A549 (cell line): ENCODE measurements at regions of chr19 and their contacts with region 1.

Region 1: DNA sequence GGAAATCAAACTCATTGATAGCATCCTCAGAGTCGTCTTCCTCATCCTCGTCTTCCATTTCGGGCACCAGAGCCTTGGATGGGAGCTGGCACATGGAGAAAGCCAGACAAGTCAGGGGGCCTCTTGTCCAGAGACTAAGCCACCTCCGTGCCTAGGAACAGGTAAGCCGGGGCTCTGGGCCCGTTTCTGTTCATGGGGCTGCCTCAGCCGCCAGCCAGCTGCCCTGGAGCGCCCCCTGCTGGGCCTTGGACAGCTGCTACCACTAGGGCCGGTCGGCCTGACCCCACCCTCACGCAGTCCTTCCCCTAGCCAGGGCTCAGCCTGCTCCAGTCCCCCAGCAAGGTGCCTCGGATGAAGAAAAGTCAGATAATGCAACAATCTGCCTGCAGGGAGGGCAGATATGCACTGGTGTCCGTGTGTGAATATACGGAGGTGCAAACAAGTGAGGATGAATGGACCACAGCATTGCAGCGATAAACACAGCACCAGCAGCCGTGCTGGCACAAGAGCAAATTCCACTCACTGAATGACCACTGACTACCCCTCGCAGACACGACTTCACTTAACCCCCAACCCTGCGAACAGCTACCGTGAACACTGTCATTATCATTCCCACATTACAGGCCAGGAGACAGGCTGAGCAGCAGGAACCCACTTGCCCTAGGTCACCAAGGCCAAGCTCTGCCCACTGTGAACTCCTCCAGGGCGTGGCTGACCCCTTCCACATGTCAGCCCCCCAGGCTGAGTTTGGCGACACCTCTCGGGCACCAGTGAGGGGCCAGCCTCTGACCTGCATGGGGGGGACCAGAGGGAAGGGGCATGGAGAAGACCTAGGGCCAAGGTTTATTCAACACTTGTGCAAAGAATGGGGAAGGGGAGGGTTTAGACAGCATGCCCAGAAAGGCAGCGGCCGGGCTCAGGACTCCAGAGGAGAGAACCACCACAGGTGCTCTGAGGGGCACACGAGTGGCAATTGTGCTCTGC is 12.1 kb upstream of the PRKD2 start:
- DNase-seq: peak; percentile 72 to 92
- ATAC-seq: peak; percentile 61 to 89
- H3K4me3 ChIP-seq: no peak overlapping the region
- H3K27ac ChIP-seq: peak overlapping the region in 1 of 2 experiments; percentile 22; a peak in 1 of 6 replicates
- H3K4me1 ChIP-seq: peaks cover 40% of the 10 kb centered on the region
- CTCF ChIP-seq: peak; percentile 97
- EP300 ChIP-seq: no peak
- POLR2A ChIP-seq: no peak
- RAD21 ChIP-seq: peak; percentile 73 to 76

Region 2: DNA sequence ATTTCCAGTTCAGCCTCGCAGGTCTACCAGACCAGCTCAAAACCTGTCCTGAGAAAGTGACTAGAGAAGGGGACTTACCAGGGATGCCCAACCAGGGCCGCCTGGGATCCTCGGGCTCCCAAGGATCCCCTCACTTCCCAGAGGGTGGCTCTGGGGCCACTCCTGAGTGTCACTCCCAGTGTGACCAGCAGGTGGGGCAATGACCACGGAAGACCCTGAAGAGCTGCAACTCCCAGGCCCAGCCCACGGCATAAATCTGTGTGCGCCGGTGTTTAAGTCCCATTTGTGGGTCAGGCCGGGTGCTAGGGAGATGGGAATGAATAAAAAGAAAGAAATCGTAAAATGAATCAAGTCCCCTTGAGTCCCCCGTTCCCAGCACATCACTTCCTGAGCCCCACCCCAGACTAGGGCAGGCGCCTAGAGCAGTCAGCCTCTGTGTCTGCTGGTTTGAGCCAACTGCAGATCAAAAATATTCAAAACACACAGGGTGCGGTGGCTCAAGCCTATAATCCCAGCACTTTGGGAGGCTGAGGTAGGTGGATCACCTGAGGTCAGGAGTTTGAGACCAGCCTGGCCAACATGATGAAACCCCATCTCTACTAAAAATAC is 114.8 kb before region 1 on chr19:
- CTCF ChIA-PET with region 1: interaction called, 100 read pairs
- POLR2A ChIA-PET with region 1: no interaction called
- DNase-seq: peak; percentile 86 to 97
- ATAC-seq: peak; percentile 80 to 92
- H3K4me3 ChIP-seq: no peak overlapping the region
- H3K27ac ChIP-seq: peak overlapping the region; percentile 18 to 52; a peak in 2 of 6 replicates
- H3K4me1 ChIP-seq: 0 out of 3 replicates have a peak, but pooled peaks cover 8% of the 10 kb centered on the region
- CTCF ChIP-seq: peak; percentile 91
- EP300 ChIP-seq: no peak
- POLR2A ChIP-seq: no peak
- RAD21 ChIP-seq: peak; percentile 79 to 84

Region 3: GRCh38 chr19:46678110-46678732 is 50.8 kb before region 1 on chr19:
- CTCF ChIA-PET with region 1: interaction called, 12 read pairs
- POLR2A ChIA-PET with region 1: no interaction called
- DNase-seq: peak; percentile 64
- ATAC-seq: peak; percentile 64 to 84
- H3K4me3 ChIP-seq: no peak overlapping the region
- H3K27ac ChIP-seq: no peak overlapping the region
- H3K4me1 ChIP-seq: no peaks in the 10 kb centered on the region
- CTCF ChIP-seq: no peak
- EP300 ChIP-seq: no peak
- POLR2A ChIP-seq: no peak
- RAD21 ChIP-seq: no peak

Region 4: GRCh38 chr19:46697204-46697960 is 31.6 kb before region 1 on chr19:
- CTCF ChIA-PET with region 1: interaction called, 102 read pairs
- POLR2A ChIA-PET with region 1: no interaction called
- DNase-seq: peak; percentile 82 to 84
- ATAC-seq: peak; percentile 86 to 97
- H3K4me3 ChIP-seq: no peak overlapping the region
- H3K27ac ChIP-seq: peak overlapping the region in 1 of 2 experiments; percentile 39; a peak in 1 of 6 replicates
- H3K4me1 ChIP-seq: peaks cover 6% of the 10 kb centered on the region; the same call in 1 of the 3 replicates
- CTCF ChIP-seq: no peak
- EP300 ChIP-seq: no peak
- POLR2A ChIP-seq: no peak
- RAD21 ChIP-seq: no peak

Region 5: GRCh38 chr19:46717034-46717723 is 11.8 kb before region 1 on chr19 and contains the start of gene PRKD2:
- CTCF ChIA-PET with region 1: interaction called, 205 read pairs
- POLR2A ChIA-PET with region 1: interaction called, 3 read pairs
- DNase-seq: peak; percentile 83 to 90
- ATAC-seq: peak; percentile 60 to 82
- H3K4me3 ChIP-seq: peak within 1 kb of the TSS; percentile 88
- H3K27ac ChIP-seq: peak within 1 kb of the TSS; percentile 84 to 90
- H3K4me1 ChIP-seq: peaks cover 25% of the 10 kb centered on the region
- CTCF ChIP-seq: no peak
- EP300 ChIP-seq: no peak
- POLR2A ChIP-seq: peak; percentile 50; the same call in 1 of the 2 replicates
- RAD21 ChIP-seq: no peak
- polyA plus RNA-seq, gene PRKD2: 8.3 and 10.4 TPM in 2 replicates

Region 6: GRCh38 chr19:46766569-46767317 is 37.8 kb after region 1 on chr19:
- CTCF ChIA-PET with region 1: interaction called, 11 read pairs
- POLR2A ChIA-PET with region 1: no interaction called
- DNase-seq: peak in 1 of 2 experiments; percentile 75
- ATAC-seq: peak; percentile 79 to 84
- H3K4me3 ChIP-seq: no peak overlapping the region
- H3K27ac ChIP-seq: no peak overlapping the region
- H3K4me1 ChIP-seq: peaks cover 21% of the 10 kb centered on the region; the same call in 2 of the 3 replicates
- CTCF ChIP-seq: peak; percentile 87
- EP300 ChIP-seq: no peak
- POLR2A ChIP-seq: no peak
- RAD21 ChIP-seq: peak; percentile 38 to 59; a peak in 4 of 5 replicates